Posterior cingulate gyrus (tissue), 11 donors: ENCODE measurements at regions of chr22 and their contacts with region 1.

Region 1: DNA sequence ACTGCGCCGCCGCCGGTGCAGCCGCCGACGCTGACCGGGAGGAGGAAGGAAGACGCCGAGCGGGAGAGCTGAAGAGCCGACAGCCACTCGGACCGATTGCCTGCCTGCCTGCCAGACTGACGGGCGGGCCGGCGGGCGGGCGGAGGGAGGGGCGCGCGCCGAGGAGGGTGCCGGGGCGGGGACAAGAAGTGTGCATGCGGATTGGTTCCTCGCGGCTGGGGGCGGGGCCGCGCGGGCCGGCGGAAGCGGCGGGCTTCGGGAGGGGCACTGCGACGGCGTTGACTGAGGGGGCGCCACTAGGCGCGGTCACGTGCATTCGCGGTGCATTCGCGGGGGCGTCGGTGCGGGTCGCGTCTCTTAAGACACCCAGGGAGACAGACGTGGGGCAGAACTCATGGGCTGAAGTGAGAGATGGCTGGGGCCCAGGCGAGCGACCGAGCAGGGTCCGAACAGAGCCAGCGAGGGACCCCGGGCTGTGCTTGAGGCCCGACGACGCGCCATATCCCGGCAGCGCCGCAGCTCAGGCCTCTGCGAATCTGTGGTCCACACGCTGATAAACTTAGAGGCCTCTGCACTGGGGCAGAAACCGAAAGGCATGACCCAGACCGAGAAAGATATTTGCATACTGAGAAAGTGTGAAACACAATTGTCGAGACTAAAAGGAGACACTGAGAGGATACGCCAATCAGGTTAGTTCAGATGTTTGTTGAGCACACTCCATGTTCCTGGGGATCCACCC is at the start of gene MAPK1:
- DNase-seq: peak; percentile 92 to 100 (median 96)

Region 2: GRCh38 chr22:21735200-21736076 is 132.3 kb before region 1 on chr22 and contains the start of gene YPEL1:
- intact Hi-C with region 1: loop called (anchors 5 kb)
- DNase-seq: peak; percentile 92 to 100 (median 98)

Region 3: GRCh38 chr22:21791635-21792625 is 75.8 kb before region 1 on chr22:
- intact Hi-C with region 1: no loop called
- DNase-seq: no peak

Region 4: GRCh38 chr22:21807544-21808529 is 59.9 kb before region 1 on chr22:
- intact Hi-C with region 1: loop called (anchors 10 kb)
- DNase-seq: no peak

Region 5: GRCh38 chr22:21894799-21895198 is 27.1 kb after region 1 on chr22:
- intact Hi-C with region 1: loop called (anchors 1 kb)
- DNase-seq: peak in 1 of 10 donors; percentile 20

Region 6: GRCh38 chr22:21938071-21938822 is 70.5 kb after region 1 on chr22:
- intact Hi-C with region 1: loop called (anchors 1 kb)
- DNase-seq: peak; percentile 90 to 99 (median 97)

Region 7: GRCh38 chr22:21948824-21949568 is 81.3 kb after region 1 on chr22:
- intact Hi-C with region 1: no loop called
- DNase-seq: no peak